ENCODE measurements at regions of chr6 and their contacts with region 1.

Region 1: GRCh38 chr6:31597006-31597405 is 4.2 kb upstream of the NCR3 start:
- DNase-seq: no peak
- ATAC-seq: peak; percentile 64
- H3K4me3 ChIP-seq: no peak overlapping the region
- H3K27ac ChIP-seq: no peak overlapping the region
- H3K4me1 ChIP-seq: 0 out of 2 replicates have a peak, but pooled peaks cover 2% of the 10 kb centered on the region
- H3K27me3 ChIP-seq: no peaks in the 10 kb centered on the region
- CTCF ChIP-seq: peak; percentile 74

Region 2: DNA sequence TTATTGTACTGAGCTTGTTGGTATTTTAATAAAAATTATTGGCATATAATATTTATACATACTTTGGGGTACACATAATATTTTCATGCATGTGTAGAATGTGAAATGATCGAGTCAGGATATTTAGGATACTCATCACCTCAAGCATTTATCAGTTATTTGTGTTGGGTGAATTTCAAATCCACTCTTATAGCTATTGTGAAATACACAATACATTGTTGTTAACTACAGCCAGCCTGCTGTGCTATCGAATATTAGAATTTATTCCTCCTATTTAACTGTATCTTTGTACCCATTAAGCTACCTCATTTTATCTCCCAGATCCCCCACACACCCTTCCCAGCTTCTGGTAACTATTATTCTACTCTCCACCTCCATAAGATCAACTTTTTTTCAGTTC is 113.6 kb before region 1 on chr6:
- CTCF ChIA-PET with region 1: no interaction called
- POLR2A ChIA-PET with region 1: interaction called, 11 read pairs
- in situ Hi-C with region 1: no loop called
- intact Hi-C with region 1: no loop called
- DNase-seq: no peak
- ATAC-seq: no peak
- H3K4me3 ChIP-seq: no peak overlapping the region
- H3K27ac ChIP-seq: no peak overlapping the region
- H3K4me1 ChIP-seq: no peaks in the 10 kb centered on the region
- H3K27me3 ChIP-seq: peaks cover 5% of the 10 kb centered on the region; the same call in 1 of the 2 replicates
- CTCF ChIP-seq: no peak

Region 3: DNA sequence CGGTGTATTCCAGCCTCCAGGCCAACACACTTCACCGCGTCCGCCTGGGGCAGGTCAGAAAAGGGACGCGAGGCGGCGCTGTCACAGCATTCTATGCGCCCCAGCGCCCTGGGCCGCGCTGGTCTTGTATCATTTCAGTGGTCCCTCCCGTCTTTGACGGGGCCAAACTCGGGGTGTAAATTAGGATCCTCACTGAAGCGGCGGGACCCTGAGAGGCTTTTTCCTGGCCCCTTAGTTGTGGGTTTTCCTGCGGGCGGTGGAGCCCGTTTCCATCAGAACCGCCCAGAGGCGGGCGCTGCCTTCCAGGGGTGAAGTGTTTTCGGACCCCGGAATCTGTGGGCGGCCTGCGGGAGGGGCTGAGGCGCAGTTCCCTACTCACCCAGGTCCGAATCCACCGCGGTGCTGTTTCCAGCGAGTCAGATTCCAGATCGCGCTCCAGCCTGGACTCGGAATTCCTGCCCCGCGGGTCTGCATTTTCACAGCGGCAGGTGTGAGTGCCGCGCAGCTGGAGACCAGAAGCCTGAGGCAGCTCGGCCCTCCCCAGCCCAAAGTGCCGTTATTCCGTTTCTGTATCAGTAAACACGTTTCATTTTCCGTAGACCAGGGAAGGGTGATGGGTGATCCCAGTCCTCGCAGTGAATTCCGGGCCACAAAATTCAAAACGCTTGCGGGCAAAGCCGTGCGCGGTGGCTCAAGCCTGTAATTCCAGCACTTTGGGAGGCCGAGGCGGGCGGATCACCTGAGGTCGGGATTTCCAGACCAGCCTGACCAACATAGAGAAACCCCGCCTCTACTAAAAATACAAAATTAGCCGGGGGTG is 102.9 kb before region 1 on chr6:
- CTCF ChIA-PET with region 1: interaction called, 3 read pairs
- POLR2A ChIA-PET with region 1: interaction called, 3 read pairs
- in situ Hi-C with region 1: no loop called
- intact Hi-C with region 1: loop called (anchors 5 kb)
- DNase-seq: no peak
- ATAC-seq: peak; percentile 73
- H3K4me3 ChIP-seq: peak overlapping the region; percentile 79 to 83
- H3K27ac ChIP-seq: peak overlapping the region; percentile 95
- H3K4me1 ChIP-seq: peaks cover 11% of the 10 kb centered on the region; the same call in 1 of the 2 replicates
- H3K27me3 ChIP-seq: no peaks in the 10 kb centered on the region
- CTCF ChIP-seq: peak; percentile 95

Region 4: GRCh38 chr6:31541658-31542521 is 55.1 kb before region 1 on chr6 and contains the start of gene DDX39B:
- CTCF ChIA-PET with region 1: interaction called, 37 read pairs
- POLR2A ChIA-PET with region 1: interaction called, 15 read pairs
- in situ Hi-C with region 1: no loop called
- intact Hi-C with region 1: loop called (anchors 1 kb)
- DNase-seq: peak; percentile 86
- ATAC-seq: peak; percentile 91
- H3K4me3 ChIP-seq: peak within 1 kb of the TSS; percentile 54 to 98
- H3K27ac ChIP-seq: peak within 1 kb of the TSS; percentile 97
- H3K4me1 ChIP-seq: peaks cover 19% of the 10 kb centered on the region
- H3K27me3 ChIP-seq: no peaks in the 10 kb centered on the region
- CTCF ChIP-seq: no peak
- total RNA-seq, gene DDX39B: 401 TPM

Region 5: GRCh38 chr6:31546962-31547726 is 49.9 kb before region 1 on chr6 and contains the start of gene NFKBIL1:
- CTCF ChIA-PET with region 1: interaction called, 37 read pairs
- POLR2A ChIA-PET with region 1: interaction called, 4 read pairs
- in situ Hi-C with region 1: no loop called
- intact Hi-C with region 1: loop called (anchors 1 kb)
- DNase-seq: peak; percentile 78
- ATAC-seq: peak; percentile 94
- H3K4me3 ChIP-seq: peak within 1 kb of the TSS; percentile 60 to 80
- H3K27ac ChIP-seq: peak within 1 kb of the TSS; percentile 96
- H3K4me1 ChIP-seq: peaks cover 12% of the 10 kb centered on the region
- H3K27me3 ChIP-seq: no peaks in the 10 kb centered on the region
- CTCF ChIP-seq: no peak; the same call in none of the 2 replicates
- total RNA-seq, gene NFKBIL1: 27.9 TPM

Region 6: GRCh38 chr6:31575335-31575901 is 21.6 kb before region 1 on chr6 and contains the start of gene TNF:
- CTCF ChIA-PET with region 1: interaction called, 22 read pairs
- POLR2A ChIA-PET with region 1: interaction called, 5 read pairs
- in situ Hi-C with region 1: no loop called
- intact Hi-C with region 1: loop called (anchors 2 kb)
- DNase-seq: no peak
- ATAC-seq: no peak
- H3K4me3 ChIP-seq: no peak within 1 kb of the TSS
- H3K27ac ChIP-seq: 0 out of 2 replicates have a peak within 1 kb of the TSS, but pooled peaks have one; percentile 21
- H3K4me1 ChIP-seq: peaks cover 19% of the 10 kb centered on the region
- H3K27me3 ChIP-seq: no peaks in the 10 kb centered on the region
- CTCF ChIP-seq: no peak
- total RNA-seq, gene TNF: 0.64 TPM

Region 7: DNA sequence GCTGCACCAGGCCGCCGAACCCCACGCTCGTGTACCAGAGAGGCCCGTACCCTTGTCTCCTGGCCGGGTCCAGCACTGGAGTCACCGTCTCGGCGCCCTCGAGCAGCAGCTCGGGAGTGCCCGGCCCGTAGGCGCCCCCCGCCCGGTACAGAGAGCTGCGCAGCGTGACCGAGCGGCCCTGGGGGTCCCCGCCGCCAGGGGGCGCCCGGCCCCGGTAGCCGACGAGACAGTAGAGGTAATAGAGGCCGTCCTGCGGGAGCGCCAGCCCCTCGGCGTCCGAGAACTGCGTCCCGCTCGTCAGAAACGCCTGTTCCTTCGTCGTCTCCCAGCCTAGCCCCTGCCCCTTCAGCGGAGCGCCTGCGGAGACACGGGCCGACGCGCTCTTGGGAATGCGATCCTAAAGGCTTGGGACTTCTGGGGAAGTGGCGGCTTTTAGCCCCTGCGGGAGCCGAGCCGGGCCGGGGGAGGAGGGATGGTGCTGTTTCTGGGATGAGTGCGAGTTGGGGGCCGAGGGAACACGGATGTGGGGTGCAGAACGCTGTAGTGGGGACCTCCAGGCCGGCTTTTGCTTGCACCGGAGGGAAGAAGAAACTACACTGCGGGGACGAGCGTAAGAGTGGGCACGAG is 16.1 kb before region 1 on chr6:
- CTCF ChIA-PET with region 1: interaction called, 22 read pairs
- POLR2A ChIA-PET with region 1: interaction called, 5 read pairs
- in situ Hi-C with region 1: no loop called
- intact Hi-C with region 1: loop called (anchors 2 kb)
- DNase-seq: no peak
- ATAC-seq: peak; percentile 92
- H3K4me3 ChIP-seq: peak overlapping the region; percentile 78 to 80
- H3K27ac ChIP-seq: peak overlapping the region; percentile 84
- H3K4me1 ChIP-seq: peaks cover 22% of the 10 kb centered on the region
- H3K27me3 ChIP-seq: no peaks in the 10 kb centered on the region
- CTCF ChIP-seq: peak; percentile 99